ENCODE measurements at regions of chr3 and their contacts with region 1.

Region 1: GRCh38 chr3:121768452-121768851 is 18.9 kb upstream of the GOLGB1 start:
- DNase-seq: no peak
- ATAC-seq: no peak

Region 2: DNA sequence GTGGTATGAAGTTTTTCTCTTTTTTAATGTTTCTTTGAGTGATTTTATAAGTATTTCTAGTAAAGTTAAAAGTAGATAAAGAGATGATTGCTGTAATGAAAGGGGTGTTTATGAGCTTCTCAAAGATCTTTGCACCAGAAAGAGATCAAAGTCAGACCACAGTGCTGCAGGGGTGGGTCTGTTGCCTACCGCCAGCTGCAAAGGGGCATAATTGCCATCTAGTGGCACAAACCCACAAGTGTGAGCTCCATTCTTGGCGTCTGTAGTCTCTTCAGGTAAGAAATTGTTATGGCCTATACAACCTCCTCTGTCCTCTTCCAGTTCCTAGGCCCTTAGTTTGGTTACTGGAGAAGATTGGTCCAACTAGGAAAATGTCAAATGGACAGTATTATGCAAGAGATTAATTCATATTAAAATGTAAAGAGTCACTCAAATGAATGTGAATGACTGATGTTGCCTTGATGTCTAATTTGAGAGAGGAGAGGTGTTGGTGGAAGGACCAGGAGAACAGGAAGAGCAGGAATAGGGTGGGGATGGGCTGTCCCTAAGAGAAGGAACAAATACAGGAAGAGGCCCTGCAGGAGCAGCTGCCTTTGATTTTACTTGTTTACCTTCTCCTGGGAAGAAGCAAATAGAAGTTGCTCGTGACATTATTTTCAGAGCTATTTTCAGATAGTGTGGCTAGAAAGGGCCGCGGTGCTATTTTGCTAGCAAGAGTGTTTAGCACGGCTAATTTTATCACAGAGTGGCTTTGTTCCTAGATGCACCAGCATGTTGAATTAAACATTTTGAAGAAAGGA is 1621.2 kb before region 1 on chr3:
- intact Hi-C with region 1: no loop called
- DNase-seq: no peak
- ATAC-seq: no peak

Region 3: DNA sequence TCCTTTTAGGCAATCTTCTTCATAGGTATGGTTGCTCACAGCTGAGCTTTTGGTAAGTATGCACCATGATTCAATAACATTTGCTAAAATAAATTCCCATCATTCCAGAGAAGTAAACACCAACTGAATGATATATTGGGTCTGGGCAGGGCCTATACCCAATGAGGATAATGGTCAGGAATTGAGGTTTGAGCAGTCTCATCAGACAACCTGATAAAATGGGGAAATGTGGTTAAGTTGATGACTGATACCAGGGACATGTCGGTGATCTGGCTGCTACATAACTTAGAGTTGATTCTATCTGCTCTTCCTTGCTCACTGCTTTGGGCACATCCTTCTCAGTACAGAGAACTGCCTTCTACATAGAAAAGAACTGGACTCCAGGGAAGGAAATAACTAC is 1576.3 kb before region 1 on chr3:
- intact Hi-C with region 1: loop called (anchors 5 kb)
- DNase-seq: no peak
- ATAC-seq: no peak

Region 4: DNA sequence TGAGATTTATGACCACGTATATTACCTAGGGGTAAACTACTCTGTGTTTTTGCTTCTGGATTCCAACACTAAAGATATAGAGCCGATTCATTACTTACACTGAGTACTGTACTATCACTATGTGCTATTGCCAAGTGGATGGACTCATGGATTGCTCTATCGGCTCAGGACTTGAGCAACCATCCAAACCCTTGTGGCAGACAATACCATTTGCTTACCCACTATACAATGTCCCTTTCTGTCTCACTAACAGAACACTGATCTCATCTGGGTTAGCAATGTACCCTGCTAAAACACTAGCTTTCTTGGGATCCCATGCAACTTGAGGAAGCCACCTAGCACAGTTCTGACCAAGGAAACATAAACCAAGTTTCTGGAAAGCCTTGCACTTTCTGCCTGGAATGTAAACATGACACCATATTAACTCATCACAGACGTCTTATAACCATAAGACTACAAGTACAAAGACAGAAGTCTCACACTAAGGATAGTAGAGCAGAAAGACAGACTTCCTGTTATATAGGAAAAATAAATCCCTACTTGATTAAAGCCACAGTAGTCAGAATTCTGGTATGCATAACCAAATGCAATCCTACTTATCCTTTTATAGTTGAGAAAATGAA is 1777.8 kb after region 1 on chr3:
- intact Hi-C with region 1: no loop called
- DNase-seq: no peak
- ATAC-seq: no peak